Activated T-helper 1 cell treated with anti-CD3 and anti-CD28 coated beads, Interleukin-12 subunit alpha, Interleukin-12 subunit beta, Interleukin-2, Interleukin-4 antibody, amounts not matched to agents 30 ng/mL and 10 ng/mL and 1 ng/mL, durations not matched to agents 14 hours and 24 hours and 36 hours (primary cell): ENCODE measurements at regions of chr19 and their contacts with region 1.

Region 1: GRCh38 chr19:50368649-50369570 is 3.5 kb upstream of the NAPSA start:
- DNase-seq: peak; percentile 73
- H3K4me3 Mint-ChIP-seq: peak overlapping the region; percentile 94
- H3K27ac Mint-ChIP-seq: peak overlapping the region; percentile 89
- H3K4me1 Mint-ChIP-seq: peaks cover 37% of the 10 kb centered on the region
- H3K27me3 Mint-ChIP-seq: no peaks in the 10 kb centered on the region

Region 2: GRCh38 chr19:50383852-50384684 is 15.2 kb after region 1 on chr19 and contains the start of gene POLD1:
- intact Hi-C with region 1: loop called (anchors 1 kb)
- DNase-seq: peak; percentile 99
- H3K4me3 Mint-ChIP-seq: peak within 1 kb of the TSS; percentile 91
- H3K27ac Mint-ChIP-seq: peak within 1 kb of the TSS; percentile 96
- H3K4me1 Mint-ChIP-seq: peaks cover 28% of the 10 kb centered on the region
- H3K27me3 Mint-ChIP-seq: no peaks in the 10 kb centered on the region
- total RNA-seq, gene POLD1: 171 and 178 TPM in 2 replicates

Region 3: DNA sequence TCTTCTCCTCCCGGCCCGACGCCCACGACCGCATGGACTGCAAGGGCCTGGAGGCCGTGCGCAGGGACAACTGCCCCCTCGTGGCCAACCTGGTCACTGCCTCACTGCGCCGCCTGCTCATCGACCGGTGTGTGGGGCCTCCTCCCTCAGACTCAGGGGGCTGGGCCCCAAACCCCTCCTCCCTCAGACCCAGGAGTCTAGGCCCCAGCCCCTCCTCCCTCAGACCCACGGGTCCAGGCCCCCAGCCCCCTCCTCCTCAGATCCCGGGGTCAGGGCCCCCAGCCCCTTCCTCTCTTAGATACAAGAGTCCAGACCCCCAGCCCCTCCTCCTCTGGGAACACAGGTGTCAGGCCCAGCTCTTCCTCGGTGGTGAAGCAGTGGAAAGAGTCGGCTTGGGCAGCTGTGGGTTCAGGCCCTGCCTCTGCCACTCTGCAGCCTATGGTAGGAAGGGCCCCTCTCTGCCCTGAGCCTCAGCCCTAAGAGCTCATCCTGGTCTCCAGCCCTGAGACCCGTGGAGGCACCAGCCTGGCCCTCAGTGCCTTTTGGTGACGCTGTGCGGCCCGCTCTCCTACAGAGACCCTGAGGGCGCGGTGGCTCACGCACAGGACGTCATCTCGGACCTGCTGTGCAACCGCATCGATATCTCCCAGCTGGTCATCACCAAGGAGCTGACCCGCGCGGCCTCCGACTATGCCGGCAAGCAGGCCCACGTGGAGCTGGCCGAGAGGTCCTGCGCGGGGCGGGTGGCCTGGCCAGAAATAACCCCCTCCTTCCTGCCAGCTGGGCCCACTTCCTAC is 46.2 kb after region 1 on chr19:
- intact Hi-C with region 1: loop called (anchors 1 kb)
- DNase-seq: peak; percentile 56
- H3K4me3 Mint-ChIP-seq: no peak overlapping the region
- H3K27ac Mint-ChIP-seq: no peak overlapping the region
- H3K4me1 Mint-ChIP-seq: peaks cover 9% of the 10 kb centered on the region
- H3K27me3 Mint-ChIP-seq: peaks cover 2% of the 10 kb centered on the region

Region 4: DNA sequence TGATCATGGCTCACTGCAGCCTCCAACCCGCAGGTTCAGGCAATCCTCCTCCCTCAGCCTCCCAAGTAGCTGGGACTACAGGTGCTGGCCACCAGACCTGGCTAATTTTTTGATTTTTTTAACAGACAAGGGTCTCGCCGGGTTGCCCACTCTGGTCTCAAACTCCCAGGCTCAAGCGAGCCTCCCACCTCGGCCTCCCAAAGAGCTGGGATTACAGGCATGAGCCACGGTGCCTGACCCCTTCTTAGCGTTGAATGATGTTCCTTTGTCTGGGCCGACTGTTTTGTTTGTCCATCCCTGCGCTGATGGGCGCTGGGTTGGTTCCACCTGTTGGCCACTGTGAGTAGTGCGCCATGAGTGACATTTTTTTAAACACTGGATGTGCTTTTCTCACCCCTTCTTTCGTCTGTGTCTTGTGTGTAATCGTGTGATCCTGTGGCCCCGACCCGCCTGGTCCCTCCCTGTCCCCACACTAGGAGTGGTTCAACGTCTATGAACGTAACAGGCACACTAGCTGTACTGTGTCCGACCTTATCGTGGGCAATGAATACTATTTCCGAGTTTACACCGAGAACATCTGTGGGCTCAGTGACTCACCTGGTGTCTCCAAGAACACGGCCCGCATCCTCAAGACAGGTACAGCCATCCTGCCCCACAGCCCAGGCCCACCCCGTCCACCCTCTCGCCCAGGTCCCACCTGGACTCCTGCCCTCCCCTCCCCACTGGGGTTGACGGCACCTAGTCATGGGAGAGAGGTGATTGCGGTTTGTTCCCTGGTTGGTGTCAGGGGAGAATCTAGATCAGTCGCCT is 92.4 kb after region 1 on chr19:
- intact Hi-C with region 1: loop called (anchors 1 kb)
- DNase-seq: peak; percentile 56
- H3K4me3 Mint-ChIP-seq: no peak overlapping the region
- H3K27ac Mint-ChIP-seq: no peak overlapping the region
- H3K4me1 Mint-ChIP-seq: peaks cover 8% of the 10 kb centered on the region
- H3K27me3 Mint-ChIP-seq: no peaks in the 10 kb centered on the region